Panc1 (cell line): ENCODE measurements at regions of chr4 and their contacts with region 1.

Region 1: GRCh38 chr4:71732706-71733105 is 51.2 kb downstream of the GC start:
- DNase-seq: no peak
- ATAC-seq: no peak
- H3K4me3 ChIP-seq: no peak overlapping the region
- H3K27ac ChIP-seq: no peak overlapping the region
- H3K4me1 ChIP-seq: no peaks in the 10 kb centered on the region
- H3K27me3 ChIP-seq: no peaks in the 10 kb centered on the region
- CTCF ChIP-seq: peak; percentile 37; the same call in 1 of the 2 replicates

Region 2: GRCh38 chr4:72286185-72286584 is 553.5 kb after region 1 on chr4:
- CTCF ChIA-PET with region 1: no interaction called
- POLR2A ChIA-PET with region 1: no interaction called
- in situ Hi-C with region 1: no loop called
- intact Hi-C with region 1: loop called (anchors 5 kb)
- DNase-seq: no peak
- ATAC-seq: no peak
- H3K4me3 ChIP-seq: no peak overlapping the region
- H3K27ac ChIP-seq: no peak overlapping the region
- H3K4me1 ChIP-seq: no peaks in the 10 kb centered on the region
- H3K27me3 ChIP-seq: no peaks in the 10 kb centered on the region
- CTCF ChIP-seq: peak; percentile 10; the same call in 1 of the 2 replicates

Region 3: DNA sequence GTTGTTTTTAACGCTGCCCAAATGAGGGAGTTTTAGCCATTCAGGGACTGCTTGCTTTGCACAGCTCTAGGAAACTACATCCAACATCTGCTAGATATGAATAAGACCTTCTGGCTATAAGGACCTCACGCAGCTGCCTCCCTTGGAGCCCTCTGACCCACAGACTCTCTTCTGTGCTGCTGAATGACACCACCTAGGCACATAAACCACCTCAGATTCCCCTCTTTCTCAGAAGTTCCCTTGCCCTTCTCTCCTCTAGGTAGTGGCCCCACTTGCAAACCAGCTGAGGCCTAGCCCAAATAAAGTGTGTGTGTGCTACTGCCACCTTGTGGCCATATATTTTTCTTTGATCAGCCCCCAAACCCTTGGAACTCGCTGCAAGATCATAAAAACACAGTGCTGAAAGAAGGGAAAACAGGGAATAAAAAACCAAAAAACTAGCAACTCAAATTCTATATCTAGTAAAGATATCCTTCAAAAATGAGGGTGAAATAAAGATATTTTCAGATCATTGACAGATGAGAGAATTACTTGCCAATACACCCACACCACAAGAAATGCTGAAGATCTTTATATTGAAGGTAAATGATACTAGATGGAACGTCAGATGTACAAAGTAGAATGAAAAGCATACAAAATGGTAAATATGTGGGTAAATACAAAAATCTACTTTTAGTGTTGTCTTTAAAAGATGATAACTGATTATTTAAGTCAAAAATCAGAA is 570.4 kb after region 1 on chr4:
- CTCF ChIA-PET with region 1: no interaction called
- POLR2A ChIA-PET with region 1: no interaction called
- in situ Hi-C with region 1: no loop called
- intact Hi-C with region 1: loop called (anchors 5 kb)
- DNase-seq: no peak
- ATAC-seq: peak; percentile 78; the same call in 1 of the 2 replicates
- H3K4me3 ChIP-seq: no peak overlapping the region
- H3K27ac ChIP-seq: no peak overlapping the region
- H3K4me1 ChIP-seq: no peaks in the 10 kb centered on the region
- H3K27me3 ChIP-seq: no peaks in the 10 kb centered on the region
- CTCF ChIP-seq: peak; percentile 77